CD4-positive, alpha-beta T cell (primary cell): ENCODE measurements at regions of chr12 and their contacts with region 1.

Region 1: GRCh38 chr12:92570056-92570753 is 132.6 kb upstream of the PLEKHG7 start:
- DNase-seq: peak in 9 of 14 experiments; percentile 20 to 83 (median 33)
- ATAC-seq: peak; percentile 95
- H3K4me3 ChIP-seq: no peak overlapping the region
- H3K4me3 Mint-ChIP-seq: no peak overlapping the region
- H3K27ac ChIP-seq: no peak overlapping the region
- H3K27ac Mint-ChIP-seq: no peak overlapping the region
- H3K4me1 ChIP-seq: no peaks in the 10 kb centered on the region
- H3K4me1 Mint-ChIP-seq: no peaks in the 10 kb centered on the region
- H3K27me3 ChIP-seq: no peaks in the 10 kb centered on the region
- H3K27me3 Mint-ChIP-seq: no peaks in the 10 kb centered on the region
- CTCF ChIP-seq: peak; percentile 96

Region 2: GRCh38 chr12:91355150-91356006 is 1214.8 kb before region 1 on chr12:
- CTCF ChIA-PET with region 1: no interaction called
- POLR2A ChIA-PET with region 1: no interaction called
- intact Hi-C with region 1: loop called in 1 of 2 experiments (anchors 2 kb)
- DNase-seq: peak in 13 of 14 experiments; percentile 4 to 66 (median 25)
- ATAC-seq: peak; percentile 76
- H3K4me3 ChIP-seq: no peak overlapping the region
- H3K4me3 Mint-ChIP-seq: no peak overlapping the region
- H3K27ac ChIP-seq: no peak overlapping the region
- H3K27ac Mint-ChIP-seq: no peak overlapping the region
- H3K4me1 ChIP-seq: no peaks in the 10 kb centered on the region
- H3K4me1 Mint-ChIP-seq: no peaks in the 10 kb centered on the region
- H3K27me3 ChIP-seq: no peaks in the 10 kb centered on the region
- H3K27me3 Mint-ChIP-seq: peaks cover 27% of the 10 kb centered on the region
- CTCF ChIP-seq: peak; percentile 58

Region 3: DNA sequence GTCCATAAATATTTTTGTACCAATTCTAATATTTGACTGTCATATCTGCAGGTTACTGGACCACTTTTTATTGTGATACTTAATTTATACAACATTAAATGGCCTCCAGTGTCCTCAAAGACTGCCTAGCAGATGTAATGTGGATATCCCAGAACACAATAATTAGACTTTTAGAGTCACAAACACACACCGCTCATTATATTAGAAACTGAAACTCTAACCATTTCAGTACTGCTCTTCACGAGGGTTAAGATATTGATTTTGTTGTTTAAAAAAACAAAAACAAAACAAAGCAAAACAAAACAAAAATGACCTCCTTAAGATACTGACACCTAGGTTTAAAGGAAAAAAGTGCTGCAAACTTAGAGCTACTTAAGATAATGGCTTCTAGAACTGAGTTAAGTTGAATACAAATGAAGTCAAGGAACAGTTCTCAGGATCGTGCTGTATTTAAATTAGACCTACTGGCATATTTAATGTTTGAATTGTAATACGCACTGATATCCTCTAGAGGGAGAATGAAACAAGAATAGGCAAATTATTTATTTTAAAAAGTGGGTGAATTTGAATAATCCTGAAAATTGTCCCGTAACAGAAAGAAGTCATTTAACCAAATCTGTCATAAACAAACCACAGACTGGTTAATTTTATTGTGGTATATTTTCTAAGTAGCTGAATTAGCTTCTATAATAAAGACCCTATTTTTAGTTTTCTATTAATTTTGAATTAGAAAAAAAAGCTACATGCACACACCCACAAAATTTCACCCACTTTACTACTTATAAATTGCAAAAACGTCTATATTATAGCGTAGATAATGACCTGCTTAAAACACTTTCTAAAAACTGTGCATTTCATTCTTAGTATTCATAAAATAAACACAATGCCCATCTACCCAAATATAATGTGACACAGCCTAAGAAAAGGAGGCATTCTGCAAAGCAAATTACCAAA is 992.3 kb before region 1 on chr12:
- CTCF ChIA-PET with region 1: interaction called, 6 read pairs
- POLR2A ChIA-PET with region 1: interaction called, 3 read pairs
- intact Hi-C with region 1: loop called (anchors 1 to 5 kb)
- DNase-seq: peak in 3 of 14 experiments; percentile 47 to 57 (median 50)
- ATAC-seq: peak; percentile 82
- H3K4me3 ChIP-seq: peak overlapping the region; percentile 47
- H3K4me3 Mint-ChIP-seq: peak overlapping the region; percentile 76
- H3K27ac ChIP-seq: no peak overlapping the region
- H3K27ac Mint-ChIP-seq: peak overlapping the region; percentile 28
- H3K4me1 ChIP-seq: no peaks in the 10 kb centered on the region
- H3K4me1 Mint-ChIP-seq: peaks cover 15% of the 10 kb centered on the region
- H3K27me3 ChIP-seq: no peaks in the 10 kb centered on the region
- H3K27me3 Mint-ChIP-seq: no peaks in the 10 kb centered on the region
- CTCF ChIP-seq: peak; percentile 85

Region 4: GRCh38 chr12:91991399-91992187 is 578.6 kb before region 1 on chr12:
- CTCF ChIA-PET with region 1: no interaction called
- POLR2A ChIA-PET with region 1: no interaction called
- intact Hi-C with region 1: loop called (anchors 1 to 2 kb)
- DNase-seq: peak in 3 of 14 experiments; percentile 72 to 79 (median 76)
- ATAC-seq: peak; percentile 89
- H3K4me3 ChIP-seq: no peak overlapping the region
- H3K4me3 Mint-ChIP-seq: peak overlapping the region; percentile 6
- H3K27ac ChIP-seq: no peak overlapping the region
- H3K27ac Mint-ChIP-seq: peak overlapping the region; percentile 59
- H3K4me1 ChIP-seq: peaks cover 3% of the 10 kb centered on the region
- H3K4me1 Mint-ChIP-seq: peaks cover 75% of the 10 kb centered on the region
- H3K27me3 ChIP-seq: no peaks in the 10 kb centered on the region
- H3K27me3 Mint-ChIP-seq: no peaks in the 10 kb centered on the region
- CTCF ChIP-seq: peak; percentile 58

Region 5: GRCh38 chr12:92396647-92397252 is 173.5 kb before region 1 on chr12:
- CTCF ChIA-PET with region 1: no interaction called
- POLR2A ChIA-PET with region 1: interaction called, 14 read pairs
- intact Hi-C with region 1: loop called in 1 of 2 experiments (anchors 1 kb)
- DNase-seq: peak in 1 of 14 experiments; percentile 29
- ATAC-seq: no peak
- H3K4me3 ChIP-seq: no peak overlapping the region
- H3K4me3 Mint-ChIP-seq: peak overlapping the region; percentile 52
- H3K27ac ChIP-seq: peak overlapping the region; percentile 72 to 80
- H3K27ac Mint-ChIP-seq: peak overlapping the region; percentile 95
- H3K4me1 ChIP-seq: peaks cover 81% of the 10 kb centered on the region
- H3K4me1 Mint-ChIP-seq: peaks cover 99% of the 10 kb centered on the region
- H3K27me3 ChIP-seq: no peaks in the 10 kb centered on the region
- H3K27me3 Mint-ChIP-seq: no peaks in the 10 kb centered on the region
- CTCF ChIP-seq: no peak

Region 6: DNA sequence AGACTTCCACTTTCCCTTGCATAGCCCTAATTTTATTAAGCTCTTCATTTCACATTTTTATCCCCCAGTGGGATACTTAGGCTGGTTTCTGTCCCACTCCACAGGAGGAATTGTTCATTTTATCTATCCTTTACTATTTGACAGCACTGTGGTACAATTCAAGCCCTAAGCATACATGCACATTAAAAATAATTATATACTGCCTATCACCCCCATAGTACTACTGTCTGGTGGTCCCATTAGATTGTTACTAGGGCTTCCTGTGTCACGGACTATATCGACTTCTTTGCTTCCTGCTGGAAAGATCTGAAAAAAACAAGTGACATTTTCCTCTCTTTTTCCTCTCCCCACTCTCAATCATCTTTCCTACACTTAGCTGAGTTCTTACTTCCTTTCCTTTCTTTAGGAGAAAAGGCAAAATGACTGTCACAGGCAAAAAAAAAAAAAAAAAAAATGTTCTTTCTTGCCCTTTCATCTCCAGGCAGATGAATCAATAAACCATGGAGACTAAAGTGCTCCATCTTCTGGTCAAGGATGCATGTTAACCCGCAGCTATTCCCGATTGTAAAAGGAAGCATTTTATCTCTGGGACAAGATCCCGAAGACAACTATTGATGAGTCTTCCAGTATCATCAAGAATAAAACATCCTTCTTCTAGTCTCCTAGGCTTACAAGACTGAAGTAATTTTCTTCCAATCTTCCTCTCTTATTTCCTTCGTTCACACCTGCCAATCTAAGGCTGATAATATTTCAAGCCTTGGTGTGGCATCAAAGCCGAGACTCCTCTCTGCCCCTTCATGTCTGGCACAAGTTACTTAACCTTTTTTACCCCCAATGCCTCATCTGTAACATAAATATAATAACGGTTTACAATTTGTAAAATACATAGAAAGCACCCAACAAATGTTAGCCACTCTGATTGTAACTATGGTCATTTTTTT is 38.2 kb after region 1 on chr12:
- CTCF ChIA-PET with region 1: interaction called, 7 read pairs
- POLR2A ChIA-PET with region 1: no interaction called
- intact Hi-C with region 1: loop called (anchors 1 to 2 kb)
- DNase-seq: peak in 3 of 14 experiments; percentile 37 to 74 (median 65)
- ATAC-seq: peak; percentile 15
- H3K4me3 ChIP-seq: no peak overlapping the region
- H3K4me3 Mint-ChIP-seq: peak overlapping the region; percentile 18
- H3K27ac ChIP-seq: no peak overlapping the region
- H3K27ac Mint-ChIP-seq: peak overlapping the region; percentile 13
- H3K4me1 ChIP-seq: no peaks in the 10 kb centered on the region
- H3K4me1 Mint-ChIP-seq: peaks cover 11% of the 10 kb centered on the region
- H3K27me3 ChIP-seq: no peaks in the 10 kb centered on the region
- H3K27me3 Mint-ChIP-seq: no peaks in the 10 kb centered on the region
- CTCF ChIP-seq: peak; percentile 46